ENCODE measurements at regions of chr12 and their contacts with region 1.

Region 1: GRCh38 chr12:54368709-54369583 is 4.7 kb upstream of the GPR84 start:
- DNase-seq: peak; percentile 96
- H3K4me3 Mint-ChIP-seq: peak overlapping the region; percentile 65
- H3K27ac Mint-ChIP-seq: peak overlapping the region; percentile 38
- H3K4me1 Mint-ChIP-seq: peaks cover 41% of the 10 kb centered on the region
- H3K27me3 Mint-ChIP-seq: peaks cover 8% of the 10 kb centered on the region

Region 2: DNA sequence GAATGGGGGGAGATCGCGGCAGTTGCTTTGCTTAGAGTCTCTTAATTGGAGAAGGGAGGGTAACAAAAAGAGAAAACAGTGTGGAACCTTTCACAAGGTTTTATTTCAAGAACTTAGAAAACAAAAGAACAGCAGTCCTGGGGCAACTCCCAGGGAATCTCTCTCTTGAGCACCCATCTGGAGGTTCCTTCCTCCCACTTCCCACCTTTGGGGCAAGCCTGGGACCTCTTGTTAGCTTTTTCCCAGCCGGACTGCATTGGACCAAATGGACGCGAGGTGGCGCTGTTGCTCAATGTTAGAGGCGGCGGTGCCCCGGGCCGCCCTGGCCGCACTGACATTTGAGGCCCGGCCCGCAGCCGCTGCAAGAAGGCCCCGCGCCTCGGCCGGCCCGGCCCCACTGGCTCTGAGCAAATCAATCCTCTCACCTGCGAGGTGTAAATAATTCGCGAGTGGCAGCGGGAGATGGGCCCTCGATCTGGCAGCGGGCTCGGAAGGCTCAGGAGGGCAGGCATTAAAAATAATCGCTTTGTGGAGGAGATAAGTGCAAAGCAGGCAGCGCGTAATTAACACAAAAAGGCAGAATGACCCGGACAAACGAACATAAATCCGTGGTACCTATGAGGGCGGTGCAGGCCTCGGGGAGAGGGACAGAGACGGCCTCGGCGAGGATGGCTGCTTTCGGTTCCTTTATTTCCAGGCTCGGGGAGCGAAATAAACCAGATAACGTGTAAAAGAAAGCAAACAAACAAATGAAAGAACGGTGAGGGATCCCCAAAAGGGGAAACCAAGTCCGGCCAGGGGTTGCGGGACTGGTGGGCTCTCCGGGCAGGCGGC is 362.9 kb before region 1 on chr12:
- intact Hi-C with region 1: loop called (anchors 10 kb)
- DNase-seq: peak; percentile 95
- H3K4me3 Mint-ChIP-seq: peak overlapping the region; percentile 85
- H3K27ac Mint-ChIP-seq: peak overlapping the region; percentile 20
- H3K4me1 Mint-ChIP-seq: peaks cover 29% of the 10 kb centered on the region
- H3K27me3 Mint-ChIP-seq: peaks cover 93% of the 10 kb centered on the region

Region 3: GRCh38 chr12:54220092-54220557 is 148.8 kb before region 1 on chr12:
- intact Hi-C with region 1: loop called (anchors 2 kb)
- DNase-seq: peak; percentile 90
- H3K4me3 Mint-ChIP-seq: peak overlapping the region; percentile 12
- H3K27ac Mint-ChIP-seq: no peak overlapping the region
- H3K4me1 Mint-ChIP-seq: peaks cover 21% of the 10 kb centered on the region
- H3K27me3 Mint-ChIP-seq: peaks cover 11% of the 10 kb centered on the region

Region 4: GRCh38 chr12:54251667-54252284 is 117.2 kb before region 1 on chr12:
- intact Hi-C with region 1: loop called (anchors 1 kb)
- DNase-seq: peak; percentile 70
- H3K4me3 Mint-ChIP-seq: no peak overlapping the region
- H3K27ac Mint-ChIP-seq: no peak overlapping the region
- H3K4me1 Mint-ChIP-seq: peaks cover 7% of the 10 kb centered on the region
- H3K27me3 Mint-ChIP-seq: no peaks in the 10 kb centered on the region

Region 5: DNA sequence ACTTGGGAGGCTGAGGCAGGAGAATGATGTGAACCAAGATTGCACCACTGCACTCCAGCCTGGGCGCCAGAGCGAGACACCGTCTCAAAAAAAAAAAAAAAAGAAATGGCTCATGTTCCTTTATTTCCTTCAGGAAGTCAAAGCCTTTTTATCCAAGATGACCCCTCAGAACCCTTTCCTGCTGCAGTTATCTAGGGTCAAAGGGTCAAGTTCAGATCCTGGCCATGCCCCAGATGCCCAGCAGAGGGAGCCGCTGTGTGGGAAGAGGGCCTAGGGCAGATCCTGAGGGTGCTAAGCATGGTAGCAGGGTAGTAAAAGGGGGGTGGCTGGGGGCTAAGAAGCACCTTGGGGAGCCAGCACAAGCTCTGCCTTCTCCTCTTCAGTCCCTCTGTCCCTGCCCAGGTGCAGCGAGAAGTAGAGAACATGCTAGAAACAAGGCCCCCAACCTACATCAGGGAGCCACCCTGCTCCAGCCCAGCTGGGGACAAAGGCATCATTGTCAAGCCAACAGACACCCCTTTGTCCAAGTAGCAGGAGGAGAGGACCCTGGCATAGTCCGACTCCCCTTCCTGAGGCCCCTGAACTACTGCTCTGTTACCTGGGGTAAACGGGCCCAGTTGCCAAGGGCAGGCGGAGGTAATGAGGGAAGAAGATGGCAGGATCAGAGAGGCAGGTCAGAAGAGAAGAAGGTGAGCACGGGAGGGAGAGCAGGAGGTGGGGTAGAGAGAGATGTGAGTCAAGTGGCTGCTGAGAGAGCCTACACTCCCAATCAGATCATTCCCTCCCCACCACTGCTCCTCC is 74.6 kb before region 1 on chr12:
- intact Hi-C with region 1: loop called (anchors 1 kb)
- DNase-seq: peak; percentile 91
- H3K4me3 Mint-ChIP-seq: no peak overlapping the region
- H3K27ac Mint-ChIP-seq: no peak overlapping the region
- H3K4me1 Mint-ChIP-seq: peaks cover 4% of the 10 kb centered on the region
- H3K27me3 Mint-ChIP-seq: peaks cover 21% of the 10 kb centered on the region

Region 6: DNA sequence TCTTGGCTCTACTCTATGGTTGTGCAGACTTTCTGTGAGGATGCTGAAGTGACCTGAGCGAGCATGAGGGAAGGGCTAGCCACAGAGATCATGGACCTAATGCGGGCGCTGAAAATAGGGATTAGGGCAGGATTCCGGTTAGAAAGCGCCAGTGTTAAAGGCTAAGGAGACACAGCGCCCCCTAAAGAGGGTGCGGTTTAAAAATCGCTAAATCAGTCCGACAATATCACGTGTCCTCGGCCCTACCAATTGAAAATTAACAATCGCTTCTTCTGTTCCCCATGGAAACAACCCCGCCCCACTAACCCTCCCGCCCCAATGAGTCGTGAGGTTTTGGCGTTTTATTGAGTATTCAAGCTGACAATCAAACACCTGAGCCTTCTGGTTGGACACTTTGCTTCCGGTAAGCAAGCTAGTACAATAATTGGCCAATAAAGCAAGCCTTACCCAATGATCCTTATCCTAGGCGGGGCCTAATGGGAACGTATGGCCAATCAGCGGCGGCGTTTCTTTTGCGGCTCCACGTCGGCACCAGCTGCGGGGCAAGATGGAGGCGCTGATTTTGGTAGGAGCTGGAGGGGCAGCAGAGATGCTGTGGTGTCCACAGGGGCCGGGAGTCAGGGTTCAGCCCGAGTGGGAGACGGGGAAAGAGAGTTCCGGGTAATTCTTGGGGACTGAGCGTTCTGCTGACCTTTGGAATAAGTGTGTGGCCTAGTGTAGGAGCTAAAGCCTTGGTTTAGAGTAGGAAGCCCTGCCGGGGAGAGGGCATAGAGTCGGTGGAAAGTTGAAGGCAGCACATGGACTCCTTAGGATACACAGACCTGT is 44.1 kb before region 1 on chr12 and contains the start of gene COPZ1:
- intact Hi-C with region 1: loop called (anchors 2 kb)
- DNase-seq: peak; percentile 97
- H3K4me3 Mint-ChIP-seq: peak within 1 kb of the TSS; percentile 98
- H3K27ac Mint-ChIP-seq: peak within 1 kb of the TSS; percentile 93
- H3K4me1 Mint-ChIP-seq: peaks cover 23% of the 10 kb centered on the region
- H3K27me3 Mint-ChIP-seq: no peaks in the 10 kb centered on the region
- total RNA-seq, gene COPZ1: 116 and 121 TPM in 2 replicates

Region 7: GRCh38 chr12:54337280-54337842 is 31.6 kb before region 1 on chr12:
- intact Hi-C with region 1: loop called (anchors 1 kb)
- DNase-seq: no peak
- H3K4me3 Mint-ChIP-seq: no peak overlapping the region
- H3K27ac Mint-ChIP-seq: no peak overlapping the region
- H3K4me1 Mint-ChIP-seq: peaks cover 14% of the 10 kb centered on the region
- H3K27me3 Mint-ChIP-seq: no peaks in the 10 kb centered on the region